Cardiac septum (tissue), 1 donor: ENCODE measurements at regions of chr10 and their contacts with region 1.

Region 1: GRCh38 chr10:97292097-97292862 is at the start of gene ARHGAP19:
- DNase-seq: peak; percentile 96
- total RNA-seq, gene ARHGAP19: 4.4 TPM

Region 2: GRCh38 chr10:97318772-97319651 is 26.7 kb after region 1 on chr10 and contains the start of gene FRAT1:
- intact Hi-C with region 1: loop called (anchors 2 kb)
- DNase-seq: peak; percentile 96
- total RNA-seq, gene FRAT1: 1.6 TPM